H1 (cell line): ENCODE measurements at regions of chr19 and their contacts with region 1.

Region 1: GRCh38 chr19:2315818-2316353 is 7.9 kb upstream of the LINGO3 start:
- DNase-seq: peak in 1 of 2 experiments; percentile 86
- H3K4me3 ChIP-seq: no peak overlapping the region; a peak in 1 of 8 replicates
- H3K27ac ChIP-seq: no peak overlapping the region
- H3K4me1 ChIP-seq: peaks cover 0 to 4% (median under 1%) of the 10 kb centered on the region in 4 experiments; a peak in 4 of 7 replicates
- H3K27me3 ChIP-seq: no peaks in the 10 kb centered on the region
- CTCF ChIP-seq: peak; percentile 85 to 93 (median 88)
- EP300 ChIP-seq: no peak
- POLR2A ChIP-seq: no peak
- RAD21 ChIP-seq: peak; percentile 95 to 96

Region 2: GRCh38 chr19:2213799-2214198 is 102.1 kb before region 1 on chr19:
- CTCF ChIA-PET with region 1: interaction called, 11 read pairs
- POLR2A ChIA-PET with region 1: no interaction called
- DNase-seq: no peak
- H3K4me3 ChIP-seq: no peak overlapping the region
- H3K27ac ChIP-seq: no peak overlapping the region
- H3K4me1 ChIP-seq: no peaks in the 10 kb centered on the region
- H3K27me3 ChIP-seq: no peaks in the 10 kb centered on the region
- CTCF ChIP-seq: no peak
- EP300 ChIP-seq: no peak
- POLR2A ChIP-seq: no peak
- RAD21 ChIP-seq: no peak

Region 3: DNA sequence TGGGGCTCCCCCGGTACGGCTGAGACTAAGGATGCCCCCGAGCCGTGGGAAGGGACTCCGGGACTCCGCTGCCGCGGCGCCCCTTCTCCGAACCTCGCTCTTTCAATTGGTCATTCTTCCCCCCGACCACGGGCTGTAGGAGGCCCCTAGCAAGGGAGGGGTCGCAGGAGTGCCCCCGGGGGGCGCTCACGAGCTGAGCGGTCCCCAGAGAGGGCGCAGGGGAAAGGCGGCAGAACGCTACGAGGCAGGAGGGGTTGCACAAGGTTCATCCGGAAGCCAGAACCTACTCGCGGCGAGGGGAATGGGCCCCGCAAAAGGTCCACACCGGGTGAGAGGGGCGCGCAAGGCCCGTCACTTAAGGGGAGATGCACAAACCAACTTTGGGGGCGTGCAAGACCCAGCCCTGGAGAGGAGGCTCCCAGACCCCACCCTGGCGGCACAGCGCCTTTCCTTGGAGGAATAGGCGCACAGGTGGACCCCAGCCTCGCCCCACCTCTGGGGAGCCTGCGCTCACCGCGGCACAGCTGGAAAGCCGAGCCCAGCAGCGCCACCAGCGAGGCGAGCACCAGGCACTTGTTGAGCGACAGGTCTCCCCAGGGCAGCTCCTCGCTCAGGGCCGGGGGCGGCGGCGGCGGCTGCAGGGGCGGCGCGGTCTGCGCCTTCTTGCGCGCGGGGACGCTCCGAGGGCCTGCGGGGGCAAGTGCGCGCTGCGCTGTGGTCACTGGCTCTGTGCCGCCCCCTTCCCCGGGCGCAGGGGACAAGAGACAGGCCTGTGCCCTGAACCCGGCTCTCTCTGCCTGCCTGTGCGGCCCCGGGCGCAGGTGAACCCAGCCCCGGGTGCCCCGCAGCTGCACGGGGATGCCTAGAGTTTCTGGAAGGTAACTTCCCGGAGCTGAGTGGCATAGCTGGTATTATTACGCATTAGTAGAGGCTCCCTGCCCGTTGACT is 62.5 kb before region 1 on chr19:
- CTCF ChIA-PET with region 1: interaction called, 21 read pairs
- POLR2A ChIA-PET with region 1: interaction called, 6 read pairs
- DNase-seq: peak in 1 of 2 experiments; percentile 84
- H3K4me3 ChIP-seq: peak overlapping the region; percentile 35 to 65 (median 47)
- H3K27ac ChIP-seq: no peak overlapping the region
- H3K4me1 ChIP-seq: peaks cover 0 to 4% (median 2%) of the 10 kb centered on the region in 4 experiments; a peak in 5 of 7 replicates
- H3K27me3 ChIP-seq: peaks cover 0 to 23% (median 12%) of the 10 kb centered on the region in 4 experiments; a peak in 6 of 7 replicates
- CTCF ChIP-seq: peak; percentile 50 to 59 (median 54)
- EP300 ChIP-seq: no peak
- POLR2A ChIP-seq: no peak
- RAD21 ChIP-seq: peak; percentile 30 to 50; a peak in 3 of 4 replicates

Region 4: DNA sequence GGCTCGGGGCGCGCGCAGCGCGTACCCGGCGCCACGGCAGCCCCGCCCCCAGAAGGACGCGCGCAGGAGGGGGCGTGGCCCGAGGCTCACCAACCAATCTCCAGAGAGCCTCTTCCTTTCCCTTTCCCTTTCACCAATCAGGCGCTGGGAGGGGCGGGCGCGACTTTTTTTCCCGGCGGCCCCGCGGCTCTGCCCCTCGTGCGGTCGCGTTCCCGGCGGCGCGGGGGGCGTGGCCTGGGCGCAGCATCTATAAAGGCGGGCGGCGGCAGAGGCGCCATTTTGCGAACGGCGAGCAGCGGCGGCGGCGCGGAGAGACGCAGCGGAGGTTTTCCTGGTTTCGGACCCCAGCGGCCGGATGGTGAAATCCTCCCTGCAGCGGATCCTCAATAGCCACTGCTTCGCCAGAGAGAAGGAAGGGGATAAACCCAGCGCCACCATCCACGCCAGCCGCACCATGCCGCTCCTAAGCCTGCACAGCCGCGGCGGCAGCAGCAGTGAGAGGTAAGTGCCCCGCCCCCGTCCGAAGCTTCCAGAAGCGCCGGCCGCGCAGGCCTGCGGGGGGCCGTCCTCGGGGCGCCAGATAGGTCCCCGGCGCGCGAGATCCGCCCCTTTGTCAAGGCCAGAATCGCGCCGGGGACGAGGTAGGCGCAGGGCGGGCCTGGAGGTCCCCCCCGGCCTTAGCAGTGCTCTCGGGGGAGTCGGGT is 46.5 kb before region 1 on chr19:
- CTCF ChIA-PET with region 1: interaction called, 106 read pairs
- POLR2A ChIA-PET with region 1: interaction called, 29 read pairs
- DNase-seq: peak; percentile 75 to 100
- H3K4me3 ChIP-seq: peak overlapping the region; percentile 87 to 100 (median 94)
- H3K27ac ChIP-seq: peak overlapping the region; percentile 76
- H3K4me1 ChIP-seq: peaks cover 0 to 20% (median 7%) of the 10 kb centered on the region in 4 experiments; a peak in 5 of 7 replicates
- H3K27me3 ChIP-seq: no peaks in the 10 kb centered on the region
- CTCF ChIP-seq: no peak
- EP300 ChIP-seq: no peak
- POLR2A ChIP-seq: peak; percentile 99
- RAD21 ChIP-seq: no peak

Region 5: DNA sequence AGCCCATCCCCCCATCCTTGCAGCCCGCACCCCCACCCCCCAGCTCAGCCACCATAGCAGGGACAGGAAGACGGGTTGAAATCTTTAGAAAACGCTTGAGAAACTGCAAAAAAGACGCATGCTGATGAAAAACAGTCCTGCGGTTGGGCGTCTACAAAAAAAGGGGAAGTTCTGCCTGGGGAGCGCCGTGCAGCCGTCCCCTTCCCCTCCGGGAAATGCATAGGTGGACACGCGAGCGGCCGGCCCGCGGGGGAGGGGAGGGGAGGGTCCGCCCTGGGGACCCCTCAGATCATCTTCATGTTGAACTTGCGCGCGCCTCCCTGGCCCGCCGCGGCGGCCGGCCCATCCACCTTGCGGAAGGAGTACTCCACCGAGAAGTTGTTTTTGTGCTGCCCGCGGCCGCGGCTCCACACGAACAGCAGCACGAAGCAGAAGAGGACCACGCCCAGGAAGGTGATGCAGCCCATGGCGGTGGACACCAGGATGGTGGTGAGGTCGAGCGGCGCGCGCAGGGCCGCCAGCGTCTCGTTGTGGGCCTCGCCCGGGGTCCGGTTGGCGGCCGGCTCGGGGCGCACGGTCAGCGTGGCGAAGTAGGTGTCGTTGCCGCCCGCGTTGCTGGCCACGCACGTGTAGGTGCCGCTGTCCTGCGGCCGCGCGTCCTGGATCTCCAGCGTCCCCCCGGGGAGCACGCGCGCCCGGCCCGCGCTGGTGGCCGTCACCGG is 26.0 kb before region 1 on chr19:
- CTCF ChIA-PET with region 1: interaction called, 31 read pairs
- POLR2A ChIA-PET with region 1: interaction called, 16 read pairs
- DNase-seq: no peak
- H3K4me3 ChIP-seq: peak overlapping the region; percentile 17 to 56 (median 20); a peak in 6 of 8 replicates
- H3K27ac ChIP-seq: no peak overlapping the region
- H3K4me1 ChIP-seq: peaks cover 0 to 22% (median 9%) of the 10 kb centered on the region in 4 experiments; a peak in 5 of 7 replicates
- H3K27me3 ChIP-seq: peaks cover 40 to 67% (median 59%) of the 10 kb centered on the region in 4 experiments
- CTCF ChIP-seq: no peak
- EP300 ChIP-seq: no peak
- POLR2A ChIP-seq: no peak
- RAD21 ChIP-seq: no peak

Region 6: DNA sequence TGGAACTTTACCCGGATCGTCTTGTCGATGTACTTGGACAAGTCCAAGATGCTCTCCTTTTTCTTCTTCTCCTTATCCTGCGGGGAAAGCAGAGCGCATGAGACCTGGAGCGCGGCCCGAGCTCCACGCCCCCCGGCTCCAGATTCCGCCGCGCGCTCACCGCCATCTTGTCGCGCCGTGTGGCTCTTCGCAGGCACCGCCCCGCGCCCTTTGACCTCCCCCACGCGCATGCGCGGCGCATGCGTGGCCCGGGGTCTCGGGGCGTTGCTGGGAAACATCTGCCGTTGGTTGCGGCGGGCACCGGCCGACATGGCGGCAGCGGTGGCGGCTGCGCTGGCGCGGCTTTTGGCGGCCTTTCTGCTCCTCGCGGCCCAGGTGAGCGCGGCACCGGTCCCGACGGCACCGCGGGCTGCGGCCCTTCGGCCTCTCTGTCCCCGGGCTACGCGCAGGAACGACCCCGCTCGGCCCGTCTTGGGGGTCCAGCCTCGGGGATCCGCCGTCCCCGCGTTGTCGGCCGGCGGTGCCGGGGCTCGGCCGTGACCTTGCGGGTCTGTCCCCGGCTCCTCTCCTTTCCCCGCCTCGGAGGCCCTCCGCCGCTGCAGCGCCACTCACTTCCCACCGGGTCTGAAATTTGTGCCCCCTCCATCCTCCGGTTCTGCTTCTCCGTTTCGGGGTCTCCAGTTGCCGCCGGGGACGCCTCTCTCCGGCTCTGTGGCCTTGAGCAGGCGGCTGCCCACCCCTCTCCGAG is 12.7 kb after region 1 on chr19 and contains the starts of genes LSM7 and SPPL2B:
- CTCF ChIA-PET with region 1: interaction called, 27 read pairs
- POLR2A ChIA-PET with region 1: interaction called, 9 read pairs
- DNase-seq: peak in 1 of 2 experiments; percentile 90
- H3K4me3 ChIP-seq: peak within 1 kb of the TSS; percentile 85 to 98 (median 91)
- H3K27ac ChIP-seq: peak within 1 kb of the TSS; percentile 55
- H3K4me1 ChIP-seq: peaks cover 0 to 33% (median 15%) of the 10 kb centered on the region in 4 experiments; a peak in 6 of 7 replicates
- H3K27me3 ChIP-seq: no peaks in the 10 kb centered on the region
- CTCF ChIP-seq: no peak
- EP300 ChIP-seq: no peak
- POLR2A ChIP-seq: peak in 1 of 2 experiments; percentile 79; a peak in 2 of 3 replicates
- RAD21 ChIP-seq: no peak
- total RNA-seq, gene LSM7: 228 and 238 TPM in 2 replicates
- total RNA-seq, gene SPPL2B: 52.6 and 55.7 TPM in 2 replicates